ENCODE measurements at regions of chr2 and their contacts with region 1.

Region 1: GRCh38 chr2:112995346-112995920 is 9.8 kb upstream of the IL36A start:
- DNase-seq: no peak
- ATAC-seq: no peak
- H3K4me3 ChIP-seq: no peak overlapping the region
- H3K27ac ChIP-seq: no peak overlapping the region
- H3K4me1 ChIP-seq: no peaks in the 10 kb centered on the region
- H3K27me3 ChIP-seq: peaks cover 0 to 3% (median 0%) of the 10 kb centered on the region in 3 donors
- CTCF ChIP-seq: no peak

Region 2: DNA sequence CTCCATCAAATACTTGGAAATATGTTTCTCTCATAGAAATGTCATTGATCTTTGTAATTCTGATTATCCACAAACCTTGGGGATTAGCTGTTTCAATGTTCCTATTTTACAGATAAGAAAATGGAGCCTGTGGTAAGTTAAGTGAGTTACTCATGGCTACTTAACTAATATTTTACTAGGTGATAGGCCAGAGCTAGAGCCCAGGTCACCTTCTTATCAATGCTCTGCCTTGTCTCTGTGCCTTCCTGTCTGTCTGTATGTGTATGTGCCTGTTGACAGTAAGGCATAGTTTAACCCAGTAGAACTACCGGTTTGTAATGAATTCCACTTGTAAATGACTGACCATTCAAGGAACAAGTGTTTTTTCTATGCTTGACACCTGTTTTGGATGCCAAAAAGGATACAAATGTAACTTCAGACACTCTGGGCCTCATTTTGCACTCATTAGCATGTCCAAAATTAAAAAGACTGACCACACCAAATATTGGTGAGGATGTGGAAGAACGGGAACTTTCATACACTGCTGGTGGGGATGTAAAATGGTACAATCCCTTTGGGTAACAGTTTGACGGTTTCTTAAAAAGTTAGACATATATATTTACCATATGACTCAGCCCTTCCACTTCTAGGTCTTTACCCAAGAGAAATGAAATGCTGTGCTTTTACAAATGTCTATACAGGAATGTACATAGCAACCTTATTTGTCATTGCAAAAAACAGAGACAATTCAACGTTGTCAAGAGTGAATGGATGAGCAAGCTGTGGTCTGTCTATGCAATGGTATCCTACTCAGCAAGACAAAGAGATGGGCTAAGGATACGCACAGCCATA is 191.5 kb before region 1 on chr2:
- intact Hi-C with region 1: no loop called
- DNase-seq: no peak
- ATAC-seq: no peak
- H3K4me3 ChIP-seq: no peak overlapping the region
- H3K27ac ChIP-seq: no peak overlapping the region
- H3K4me1 ChIP-seq: no peaks in the 10 kb centered on the region
- H3K27me3 ChIP-seq: no peaks in the 10 kb centered on the region
- CTCF ChIP-seq: no peak

Region 3: DNA sequence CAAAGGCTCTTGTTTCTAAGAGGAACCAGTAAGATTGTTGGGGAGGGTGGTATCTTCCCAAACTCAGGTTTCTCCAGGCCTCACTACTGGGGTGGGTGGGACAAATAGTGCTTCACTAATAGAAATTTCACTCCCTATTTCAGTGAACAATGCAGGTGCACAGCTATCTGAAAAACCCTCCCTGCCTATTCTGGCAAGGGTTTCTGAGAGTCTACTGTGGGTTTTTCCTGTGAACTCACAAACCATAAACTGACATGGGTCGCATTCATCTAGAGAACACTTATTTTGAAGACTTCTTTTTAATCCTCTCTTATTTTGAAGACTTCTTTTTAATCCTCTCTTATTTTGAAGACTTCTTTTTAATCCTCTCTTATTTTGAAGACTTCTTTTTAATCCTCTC is 14.2 kb after region 1 on chr2:
- intact Hi-C with region 1: loop called in 1 of 2 experiments (anchors 1 kb)
- DNase-seq: no peak
- ATAC-seq: no peak
- H3K4me3 ChIP-seq: no peak overlapping the region
- H3K27ac ChIP-seq: no peak overlapping the region
- H3K4me1 ChIP-seq: no peaks in the 10 kb centered on the region
- H3K27me3 ChIP-seq: no peaks in the 10 kb centered on the region
- CTCF ChIP-seq: no peak

Region 4: GRCh38 chr2:113080134-113080533 is 84.7 kb after region 1 on chr2:
- intact Hi-C with region 1: no loop called
- DNase-seq: no peak
- ATAC-seq: peak in 1 of 4 donors; percentile 54
- H3K4me3 ChIP-seq: no peak overlapping the region
- H3K27ac ChIP-seq: no peak overlapping the region
- H3K4me1 ChIP-seq: no peaks in the 10 kb centered on the region
- H3K27me3 ChIP-seq: peaks cover 0 to 3% (median 2%) of the 10 kb centered on the region in 3 donors
- CTCF ChIP-seq: peak; percentile 37

Measured in psoas muscle (tissue), 8 donors.